ENCODE measurements at regions of chr14 and their contacts with region 1.

Region 1: GRCh38 chr14:59189786-59190771 is 1.6 kb downstream of the DAAM1 start:
- DNase-seq: peak; percentile 99
- ATAC-seq: peak; percentile 46
- H3K4me3 ChIP-seq: peak overlapping the region; percentile 79
- H3K27ac ChIP-seq: no peak overlapping the region
- H3K4me1 ChIP-seq: peaks cover 27% of the 10 kb centered on the region
- H3K27me3 ChIP-seq: peaks cover 18% of the 10 kb centered on the region
- CTCF ChIP-seq: peak; percentile 89

Region 2: DNA sequence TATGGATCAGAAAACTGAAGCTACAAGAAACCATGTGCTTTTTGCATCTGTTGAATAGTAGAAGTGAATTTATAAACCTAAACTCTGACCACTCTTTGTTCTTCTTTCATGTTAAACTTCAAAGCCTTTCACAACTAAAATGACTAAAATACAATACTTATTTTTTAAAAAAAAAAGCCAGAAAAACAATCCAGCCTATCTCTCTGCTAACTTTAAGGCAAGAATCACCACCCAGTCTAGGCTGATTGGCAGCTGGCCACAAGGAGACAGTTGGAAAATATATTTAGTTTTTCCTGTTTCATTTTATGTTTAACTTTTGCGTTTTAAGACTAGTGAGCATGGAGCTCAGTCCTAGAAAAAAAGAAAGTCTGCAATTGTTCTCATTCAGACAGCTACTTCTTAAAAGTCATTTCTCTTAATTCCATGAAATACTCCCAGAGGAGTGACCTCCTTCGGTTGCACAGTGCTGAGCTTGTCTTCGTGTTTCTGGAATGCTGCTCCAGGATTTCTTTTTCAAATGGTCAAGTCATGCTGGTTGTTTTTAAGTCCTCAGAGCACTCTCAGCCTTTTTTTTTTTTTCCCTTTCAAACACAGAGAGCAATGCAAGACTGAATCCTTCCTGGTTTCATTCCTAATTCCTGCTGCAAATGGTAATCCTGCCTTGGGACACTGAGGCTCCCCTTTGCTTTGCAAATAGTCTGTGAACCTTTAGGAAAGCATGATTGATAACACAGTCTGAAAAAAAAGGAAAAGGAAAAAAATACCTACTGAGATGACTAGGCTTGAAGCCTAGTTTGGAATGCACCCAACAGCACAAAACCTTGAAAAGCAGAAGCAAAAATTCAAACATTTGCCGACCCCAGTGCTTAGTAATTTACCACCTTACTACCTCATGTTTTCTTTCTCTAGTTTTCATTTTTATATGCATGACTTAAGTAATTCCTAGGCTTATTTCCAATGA is 234.9 kb before region 1 on chr14:
- CTCF ChIA-PET with region 1: no interaction called
- POLR2A ChIA-PET with region 1: no interaction called
- intact Hi-C with region 1: no loop called
- DNase-seq: no peak
- ATAC-seq: no peak
- H3K4me3 ChIP-seq: no peak overlapping the region
- H3K27ac ChIP-seq: no peak overlapping the region
- H3K4me1 ChIP-seq: no peaks in the 10 kb centered on the region
- H3K27me3 ChIP-seq: peaks cover 87% of the 10 kb centered on the region
- CTCF ChIP-seq: no peak

Region 3: DNA sequence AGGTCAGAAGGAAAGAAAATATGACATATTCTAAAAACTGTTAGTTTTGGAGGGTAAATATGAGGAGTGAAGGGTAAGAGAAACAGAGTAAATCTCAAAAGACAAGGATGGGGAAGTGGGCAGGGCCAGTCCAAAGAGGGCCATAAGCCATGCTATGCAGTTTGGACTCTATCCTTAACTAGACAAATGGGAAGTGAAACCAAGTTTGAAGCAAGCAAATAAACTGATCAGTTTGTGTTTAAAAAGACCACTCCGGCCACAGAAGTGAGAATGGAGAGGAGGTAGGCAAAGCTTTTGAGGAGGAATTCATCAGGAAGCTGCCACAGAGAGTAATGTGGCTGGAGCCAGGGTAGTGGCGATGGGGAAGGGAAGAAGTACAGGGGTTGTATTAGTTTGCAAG is 39.1 kb before region 1 on chr14:
- CTCF ChIA-PET with region 1: no interaction called
- POLR2A ChIA-PET with region 1: no interaction called
- intact Hi-C with region 1: no loop called
- DNase-seq: no peak
- ATAC-seq: no peak
- H3K4me3 ChIP-seq: no peak overlapping the region
- H3K27ac ChIP-seq: no peak overlapping the region
- H3K4me1 ChIP-seq: no peaks in the 10 kb centered on the region
- H3K27me3 ChIP-seq: peaks cover 45% of the 10 kb centered on the region
- CTCF ChIP-seq: no peak

Region 4: GRCh38 chr14:59275653-59276052 is 85.6 kb after region 1 on chr14:
- CTCF ChIA-PET with region 1: no interaction called
- POLR2A ChIA-PET with region 1: no interaction called
- intact Hi-C with region 1: loop called (anchors 1 kb)
- DNase-seq: peak; percentile 100
- ATAC-seq: peak; percentile 75
- H3K4me3 ChIP-seq: peak overlapping the region; percentile 23
- H3K27ac ChIP-seq: peak overlapping the region; percentile 64
- H3K4me1 ChIP-seq: peaks cover 60% of the 10 kb centered on the region
- H3K27me3 ChIP-seq: no peaks in the 10 kb centered on the region
- CTCF ChIP-seq: no peak

Region 5: DNA sequence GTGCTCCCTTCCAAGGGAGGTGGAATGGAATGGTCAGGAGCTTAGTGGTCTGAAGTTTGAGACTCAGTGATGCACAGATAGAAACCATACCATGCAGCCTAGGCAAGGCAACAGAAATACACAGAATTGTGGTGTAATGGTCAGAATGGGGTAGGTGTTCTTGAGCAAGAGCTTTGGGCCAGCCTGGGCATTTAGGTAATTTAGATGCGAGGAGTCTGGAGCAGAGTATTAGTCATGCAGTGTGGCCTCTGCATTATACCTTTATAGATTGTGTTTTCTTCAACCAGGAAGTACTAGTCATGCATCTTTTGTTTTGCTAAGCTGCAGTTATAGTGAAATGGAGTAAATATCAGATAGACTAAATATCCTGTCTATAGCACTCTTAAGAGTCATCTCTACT is 116.7 kb after region 1 on chr14:
- CTCF ChIA-PET with region 1: interaction called, 7 read pairs
- POLR2A ChIA-PET with region 1: interaction called, 12 read pairs
- intact Hi-C with region 1: loop called (anchors 2 kb)
- DNase-seq: peak; percentile 99
- ATAC-seq: peak; percentile 91
- H3K4me3 ChIP-seq: peak overlapping the region; percentile 3; the same call in 1 of the 2 replicates
- H3K27ac ChIP-seq: peak overlapping the region; percentile 39
- H3K4me1 ChIP-seq: peaks cover 49% of the 10 kb centered on the region
- H3K27me3 ChIP-seq: no peaks in the 10 kb centered on the region
- CTCF ChIP-seq: no peak

Region 6: DNA sequence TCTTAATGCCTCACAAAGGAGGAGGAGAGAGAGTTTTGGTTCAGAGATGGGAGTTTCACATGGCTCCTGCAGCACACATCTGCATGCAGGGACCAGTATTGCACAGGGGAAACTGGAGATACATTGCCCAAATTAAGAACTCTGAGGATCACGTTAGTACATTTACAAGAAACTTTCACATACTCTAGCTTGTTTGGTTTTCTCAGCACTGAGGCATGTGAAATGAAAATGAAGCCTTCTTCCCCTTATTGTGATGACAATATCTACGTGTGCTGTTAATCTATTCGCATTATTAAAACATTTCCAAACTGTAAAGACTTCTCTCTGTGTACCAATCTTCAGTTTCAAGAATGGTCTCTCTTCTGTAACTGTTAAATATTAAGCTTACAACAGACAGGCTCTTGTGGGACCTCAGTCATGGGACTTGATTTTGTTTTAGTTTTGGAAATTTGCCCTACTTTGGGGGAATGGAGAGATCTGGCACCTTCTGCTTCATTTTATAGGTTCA is 123.1 kb after region 1 on chr14:
- CTCF ChIA-PET with region 1: interaction called, 10 read pairs
- POLR2A ChIA-PET with region 1: no interaction called
- intact Hi-C with region 1: loop called (anchors 1 kb)
- DNase-seq: no peak
- ATAC-seq: no peak
- H3K4me3 ChIP-seq: no peak overlapping the region
- H3K27ac ChIP-seq: no peak overlapping the region
- H3K4me1 ChIP-seq: peaks cover 14% of the 10 kb centered on the region
- H3K27me3 ChIP-seq: no peaks in the 10 kb centered on the region
- CTCF ChIP-seq: no peak

Region 7: GRCh38 chr14:59422069-59422881 is 232.2 kb after region 1 on chr14:
- CTCF ChIA-PET with region 1: no interaction called
- POLR2A ChIA-PET with region 1: no interaction called
- intact Hi-C with region 1: loop called (anchors 1 kb)
- DNase-seq: peak; percentile 62
- ATAC-seq: peak; percentile 39; the same call in 1 of the 2 replicates
- H3K4me3 ChIP-seq: no peak overlapping the region
- H3K27ac ChIP-seq: no peak overlapping the region
- H3K4me1 ChIP-seq: no peaks in the 10 kb centered on the region
- H3K27me3 ChIP-seq: no peaks in the 10 kb centered on the region
- CTCF ChIP-seq: peak; percentile 97

Region 8: DNA sequence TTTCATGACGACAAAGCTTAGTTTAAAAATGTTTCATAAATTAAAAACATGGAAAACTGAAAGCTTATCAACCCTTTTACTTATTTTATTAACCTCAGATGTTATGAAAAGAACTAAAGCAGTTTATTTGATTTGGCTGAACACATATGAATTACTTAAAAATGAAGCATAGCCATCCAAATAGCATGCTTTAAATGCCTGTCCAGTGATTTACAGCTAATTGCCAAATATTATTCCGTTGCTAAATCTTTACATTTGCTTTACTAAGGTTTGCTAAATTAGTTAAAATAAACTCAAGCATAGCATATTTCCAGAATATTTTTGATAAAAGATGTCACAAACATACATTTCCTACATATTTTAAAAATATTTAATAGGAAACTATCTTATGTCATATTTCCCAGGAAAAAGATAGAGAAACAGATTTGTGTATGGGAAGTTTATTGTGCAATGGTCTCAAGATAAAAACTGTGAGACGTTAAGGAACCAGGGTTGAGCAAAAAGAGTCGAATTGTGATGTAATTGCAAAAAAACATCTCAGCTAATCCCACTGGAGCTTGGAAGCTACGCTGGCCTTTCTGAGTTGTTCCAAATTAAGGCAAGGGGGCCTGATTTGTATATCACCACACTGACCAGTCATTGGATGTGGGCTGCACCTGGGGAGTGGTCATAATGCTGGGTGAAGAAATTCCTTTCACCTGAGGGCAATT is 249.3 kb after region 1 on chr14:
- CTCF ChIA-PET with region 1: no interaction called
- POLR2A ChIA-PET with region 1: no interaction called
- intact Hi-C with region 1: loop called (anchors 1 kb)
- DNase-seq: no peak
- ATAC-seq: no peak
- H3K4me3 ChIP-seq: no peak overlapping the region
- H3K27ac ChIP-seq: no peak overlapping the region
- H3K4me1 ChIP-seq: peaks cover 13% of the 10 kb centered on the region
- H3K27me3 ChIP-seq: no peaks in the 10 kb centered on the region
- CTCF ChIP-seq: no peak

Region 9: GRCh38 chr14:59483900-59484638 is 294.0 kb after region 1 on chr14 and contains the starts of genes JKAMP and L3HYPDH:
- CTCF ChIA-PET with region 1: interaction called, 4 read pairs
- POLR2A ChIA-PET with region 1: interaction called, 5 read pairs
- intact Hi-C with region 1: loop called (anchors 1 kb)
- DNase-seq: peak; percentile 100
- ATAC-seq: peak; percentile 75
- H3K4me3 ChIP-seq: peak within 1 kb of the TSS; percentile 79
- H3K27ac ChIP-seq: peak within 1 kb of the TSS; percentile 83
- H3K4me1 ChIP-seq: peaks cover 42% of the 10 kb centered on the region
- H3K27me3 ChIP-seq: no peaks in the 10 kb centered on the region
- CTCF ChIP-seq: peak; percentile 92
- total RNA-seq, gene JKAMP: 130 and 147 TPM in 2 replicates
- total RNA-seq, gene L3HYPDH: 108 and 117 TPM in 2 replicates

Region 10: GRCh38 chr14:61090432-61091216 is 1900.5 kb after region 1 on chr14:
- CTCF ChIA-PET with region 1: no interaction called
- POLR2A ChIA-PET with region 1: no interaction called
- intact Hi-C with region 1: no loop called
- DNase-seq: no peak
- ATAC-seq: no peak
- H3K4me3 ChIP-seq: no peak overlapping the region
- H3K27ac ChIP-seq: no peak overlapping the region
- H3K4me1 ChIP-seq: peaks cover 26% of the 10 kb centered on the region
- H3K27me3 ChIP-seq: no peaks in the 10 kb centered on the region
- CTCF ChIP-seq: no peak

Measured in PC-3 (cell line).